Activated CD4-positive, alpha-beta T cell treated with anti-CD3 and anti-CD28 coated beads for 36 hours (primary cell): ENCODE measurements at regions of chr20 and their contacts with region 1.

Region 1: DNA sequence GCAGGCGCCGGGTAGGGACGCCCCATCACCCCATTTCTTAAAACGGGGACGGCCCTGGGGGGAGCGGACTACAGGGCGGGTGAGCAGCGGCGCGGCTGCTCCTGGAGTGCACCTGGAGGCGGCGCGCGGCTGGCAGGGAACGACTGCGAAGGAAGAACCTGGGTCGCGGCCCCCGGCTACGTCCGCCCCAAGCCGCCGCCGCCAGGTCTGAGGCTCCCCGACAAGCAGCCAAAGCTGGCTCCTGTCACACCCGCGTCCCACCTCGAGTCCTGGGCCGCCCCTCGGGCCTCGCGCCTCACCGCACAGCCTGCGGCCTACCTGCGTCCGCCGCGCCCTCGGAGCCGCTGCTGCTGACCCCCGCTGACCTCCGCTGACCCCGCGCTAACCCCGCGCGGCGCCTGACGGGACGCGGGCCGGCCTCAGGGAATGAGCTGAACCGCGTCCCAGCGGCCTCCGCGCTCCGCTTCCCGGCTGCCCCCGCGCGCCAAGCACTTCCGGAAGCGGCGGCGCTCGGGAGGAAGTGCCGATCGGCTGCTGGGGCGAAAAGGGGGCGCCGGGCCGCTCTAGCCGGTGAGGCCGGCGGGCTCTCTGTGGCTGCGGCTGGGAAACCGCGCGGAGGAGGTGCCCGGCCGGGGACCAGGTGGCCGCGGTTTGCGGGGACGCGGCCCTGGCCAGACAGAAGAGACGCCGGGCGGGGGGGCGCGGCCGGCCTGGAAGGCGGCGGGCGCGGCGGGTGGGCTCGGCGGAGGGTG is at the starts of genes ARFRP1 and ZGPAT:
- DNase-seq: peak; percentile 94
- ATAC-seq: peak; percentile 89
- H3K4me3 Mint-ChIP-seq: peak within 1 kb of the TSS; percentile 95
- H3K27ac Mint-ChIP-seq: peak within 1 kb of the TSS; percentile 90
- H3K4me1 Mint-ChIP-seq: peaks cover 44% of the 10 kb centered on the region
- H3K27me3 Mint-ChIP-seq: no peaks in the 10 kb centered on the region
- total RNA-seq, gene ARFRP1: 36.4 to 52.0 TPM
- total RNA-seq, gene ZGPAT: 15.3 to 21.9 TPM

Region 2: DNA sequence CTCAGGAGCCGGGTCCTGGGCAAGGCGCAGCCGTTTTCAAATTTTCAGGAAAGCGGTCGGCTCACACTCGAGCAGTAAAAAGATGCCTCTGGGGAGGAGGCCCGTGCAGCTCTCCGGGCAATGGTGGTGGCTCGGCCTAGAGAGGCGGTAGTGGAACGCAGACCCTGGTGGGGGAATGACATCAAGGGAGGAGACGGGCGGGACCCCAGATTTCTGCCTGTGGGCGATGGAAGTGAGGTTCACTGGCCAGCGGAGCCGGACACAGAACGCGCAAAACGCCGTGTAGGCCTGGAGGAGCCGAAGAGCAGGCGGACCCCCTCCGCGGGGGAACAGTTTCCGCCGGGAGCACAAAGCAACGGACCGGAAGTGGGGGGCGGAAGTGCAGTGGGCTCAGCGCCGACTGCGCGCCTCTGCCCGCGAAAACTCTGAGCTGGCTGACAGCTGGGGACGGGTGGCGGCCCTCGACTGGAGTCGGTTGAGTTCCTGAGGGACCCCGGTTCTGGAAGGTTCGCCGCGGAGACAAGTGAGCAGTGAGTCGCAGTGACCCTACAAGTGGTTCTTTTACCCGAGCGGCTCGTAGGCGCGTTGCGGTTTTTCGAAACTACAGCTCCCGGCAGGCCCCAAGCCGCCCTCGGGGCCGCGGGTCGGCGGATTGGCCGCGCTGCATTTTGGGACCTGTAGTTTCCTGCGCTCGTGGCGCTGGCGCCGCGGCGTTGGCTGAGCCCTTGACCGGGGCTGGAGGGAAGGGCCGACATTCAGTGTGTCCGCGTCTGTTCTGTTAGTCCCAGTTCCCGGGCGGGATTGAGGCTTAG is 49.6 kb before region 1 on chr20 and contains the start of gene RTEL1:
- CTCF ChIA-PET with region 1: no interaction called
- POLR2A ChIA-PET with region 1: interaction called, 3 read pairs
- intact Hi-C with region 1: loop called in 1 of 2 experiments (anchors 1 kb)
- DNase-seq: peak; percentile 92
- ATAC-seq: peak; percentile 82
- H3K4me3 Mint-ChIP-seq: peak within 1 kb of the TSS; percentile 95
- H3K27ac Mint-ChIP-seq: peak within 1 kb of the TSS; percentile 94
- H3K4me1 Mint-ChIP-seq: peaks cover 30% of the 10 kb centered on the region
- H3K27me3 Mint-ChIP-seq: no peaks in the 10 kb centered on the region
- total RNA-seq, gene RTEL1: 44.5 to 44.7 TPM

Region 3: GRCh38 chr20:63750807-63751470 is 43.2 kb after region 1 on chr20:
- CTCF ChIA-PET with region 1: interaction called, 3 read pairs
- POLR2A ChIA-PET with region 1: no interaction called
- intact Hi-C with region 1: loop called in 1 of 2 experiments (anchors 1 kb)
- DNase-seq: peak; percentile 81
- ATAC-seq: peak; percentile 85
- H3K4me3 Mint-ChIP-seq: peak overlapping the region; percentile 49
- H3K27ac Mint-ChIP-seq: peak overlapping the region; percentile 89
- H3K4me1 Mint-ChIP-seq: peaks cover 20% of the 10 kb centered on the region
- H3K27me3 Mint-ChIP-seq: no peaks in the 10 kb centered on the region

Region 4: DNA sequence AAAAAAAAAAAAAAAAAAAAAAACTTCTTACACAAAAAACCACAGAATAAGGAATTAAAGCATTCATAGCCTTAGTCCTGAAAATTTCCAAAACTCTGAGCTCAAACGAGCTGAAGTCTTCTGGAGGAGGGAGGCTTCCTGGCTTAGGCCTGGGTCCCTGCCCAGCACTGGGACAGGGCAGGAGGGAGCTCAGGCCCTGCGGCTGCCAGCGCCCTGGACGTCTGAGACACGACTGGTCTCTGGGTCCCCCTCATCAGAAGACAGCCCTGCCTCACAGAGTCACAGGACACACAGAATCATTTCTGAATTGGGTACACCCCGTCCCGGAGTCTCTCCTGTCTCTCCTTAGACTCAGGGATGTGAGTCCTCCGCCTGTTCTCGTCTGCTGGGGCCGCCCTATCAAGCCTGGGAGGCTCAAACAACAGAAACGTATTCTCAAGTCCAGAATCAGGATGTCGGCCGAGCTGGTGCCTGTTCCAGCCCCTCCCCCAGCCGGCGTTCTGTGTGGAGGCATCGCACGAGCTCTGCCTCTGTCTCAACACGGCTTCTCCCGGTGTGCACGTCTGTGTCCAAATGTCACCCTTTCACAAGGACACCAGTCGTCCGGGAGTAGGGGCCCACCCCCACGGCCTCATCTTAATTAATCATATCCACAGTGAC is 83.9 kb after region 1 on chr20:
- CTCF ChIA-PET with region 1: interaction called, 3 read pairs
- POLR2A ChIA-PET with region 1: no interaction called
- intact Hi-C with region 1: loop called (anchors 1 to 5 kb)
- DNase-seq: no peak
- ATAC-seq: no peak
- H3K4me3 Mint-ChIP-seq: no peak overlapping the region
- H3K27ac Mint-ChIP-seq: no peak overlapping the region
- H3K4me1 Mint-ChIP-seq: peaks cover 2% of the 10 kb centered on the region
- H3K27me3 Mint-ChIP-seq: peaks cover 2% of the 10 kb centered on the region

Region 5: GRCh38 chr20:64062596-64063388 is 355.1 kb after region 1 on chr20 and contains the start of gene TCEA2:
- CTCF ChIA-PET with region 1: no interaction called
- POLR2A ChIA-PET with region 1: no interaction called
- intact Hi-C with region 1: loop called in 1 of 2 experiments (anchors 2 kb)
- DNase-seq: peak; percentile 98
- ATAC-seq: peak; percentile 83
- H3K4me3 Mint-ChIP-seq: peak within 1 kb of the TSS; percentile 82
- H3K27ac Mint-ChIP-seq: peak within 1 kb of the TSS; percentile 79
- H3K4me1 Mint-ChIP-seq: peaks cover 51% of the 10 kb centered on the region
- H3K27me3 Mint-ChIP-seq: no peaks in the 10 kb centered on the region
- total RNA-seq, gene TCEA2: 40.6 to 50.0 TPM